B cell (primary cell): ENCODE measurements at regions of chr7 and their contacts with region 1.

Region 1: GRCh38 chr7:98251841-98252639 is at the start of gene TECPR1:
- DNase-seq: peak; percentile 91
- ATAC-seq: peak; percentile 95
- H3K4me3 ChIP-seq: peak within 1 kb of the TSS; percentile 78 to 95 (median 83)
- H3K4me3 Mint-ChIP-seq: peak within 1 kb of the TSS; percentile 98
- H3K27ac ChIP-seq: peak within 1 kb of the TSS; percentile 68 to 71
- H3K27ac Mint-ChIP-seq: peak within 1 kb of the TSS; percentile 90
- H3K4me1 ChIP-seq: peaks cover 22 to 40% of the 10 kb centered on the region in 2 donors
- H3K4me1 Mint-ChIP-seq: peaks cover 34% of the 10 kb centered on the region
- H3K27me3 ChIP-seq: no peaks in the 10 kb centered on the region
- H3K27me3 Mint-ChIP-seq: no peaks in the 10 kb centered on the region
- CTCF ChIP-seq: no peak
- total RNA-seq, gene TECPR1: 52.2 and 66.4 TPM in 2 replicates

Region 2: DNA sequence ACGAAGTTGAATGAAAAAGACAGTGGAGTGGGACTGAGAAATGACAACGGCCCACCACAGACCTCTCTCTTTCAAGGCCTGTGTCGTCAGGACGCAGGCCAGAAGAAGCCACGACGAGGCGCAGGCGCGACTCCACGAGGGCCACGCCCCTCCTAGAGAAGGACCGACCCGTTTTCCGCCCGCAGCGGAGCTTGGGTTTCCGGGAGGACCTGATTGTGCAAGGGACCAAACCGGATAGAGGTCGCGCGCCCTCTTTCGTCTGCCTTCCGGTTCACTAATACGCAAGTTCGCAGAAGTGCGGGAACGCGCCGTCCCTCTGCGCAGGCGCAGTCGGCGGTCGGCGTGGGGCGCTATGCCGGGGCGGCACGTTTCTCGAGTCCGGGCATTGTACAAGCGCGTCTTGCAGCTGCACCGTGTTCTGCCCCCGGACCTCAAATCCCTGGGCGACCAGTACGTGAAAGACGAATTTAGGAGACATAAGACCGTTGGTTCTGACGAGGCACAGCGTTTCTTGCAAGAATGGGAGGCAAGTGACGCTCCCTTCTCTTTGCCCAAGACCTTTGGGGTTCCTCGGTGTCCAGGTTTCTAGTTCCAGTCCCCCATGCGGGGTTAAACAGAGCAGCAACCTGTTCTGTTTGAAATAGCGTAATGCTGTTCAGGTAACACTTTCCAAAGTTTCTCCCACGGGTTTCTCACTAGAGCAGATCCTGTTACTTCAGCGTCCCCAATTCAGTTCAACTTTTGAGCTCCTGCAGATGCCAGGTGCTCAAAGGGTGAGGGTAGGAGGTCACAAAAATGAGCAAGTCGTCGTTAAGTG is 1134.5 kb before region 1 on chr7 and contains the start of gene SDHAF3:
- CTCF ChIA-PET with region 1: no interaction called
- POLR2A ChIA-PET with region 1: no interaction called
- intact Hi-C with region 1: loop called (anchors 10 kb)
- DNase-seq: peak; percentile 98
- ATAC-seq: peak; percentile 85
- H3K4me3 ChIP-seq: peak within 1 kb of the TSS; percentile 71 to 99 (median 88)
- H3K4me3 Mint-ChIP-seq: peak within 1 kb of the TSS; percentile 92
- H3K27ac ChIP-seq: peak within 1 kb of the TSS; percentile 85 to 90
- H3K27ac Mint-ChIP-seq: peak within 1 kb of the TSS; percentile 96
- H3K4me1 ChIP-seq: peaks cover 24 to 25% of the 10 kb centered on the region in 2 donors
- H3K4me1 Mint-ChIP-seq: peaks cover 51% of the 10 kb centered on the region
- H3K27me3 ChIP-seq: no peaks in the 10 kb centered on the region
- H3K27me3 Mint-ChIP-seq: no peaks in the 10 kb centered on the region
- CTCF ChIP-seq: peak; percentile 23
- total RNA-seq, gene SDHAF3: 18.5 and 20.2 TPM in 2 replicates

Region 3: GRCh38 chr7:98106647-98107445 is 145.2 kb before region 1 on chr7 and contains the start of gene LMTK2:
- CTCF ChIA-PET with region 1: interaction called, 6 read pairs
- POLR2A ChIA-PET with region 1: interaction called, 6 read pairs
- intact Hi-C with region 1: loop called (anchors 1 kb)
- DNase-seq: peak; percentile 97
- ATAC-seq: peak; percentile 100
- H3K4me3 ChIP-seq: peak within 1 kb of the TSS; percentile 74 to 91 (median 84)
- H3K4me3 Mint-ChIP-seq: peak within 1 kb of the TSS; percentile 98
- H3K27ac ChIP-seq: peak within 1 kb of the TSS; percentile 47 to 77
- H3K27ac Mint-ChIP-seq: peak within 1 kb of the TSS; percentile 92
- H3K4me1 ChIP-seq: peaks cover 10 to 14% of the 10 kb centered on the region in 2 donors
- H3K4me1 Mint-ChIP-seq: peaks cover 24% of the 10 kb centered on the region
- H3K27me3 ChIP-seq: peaks cover 0 to 24% (median 14%) of the 10 kb centered on the region in 4 experiments
- H3K27me3 Mint-ChIP-seq: peaks cover 10% of the 10 kb centered on the region
- CTCF ChIP-seq: peak; percentile 91
- total RNA-seq, gene LMTK2: 13.1 and 16.7 TPM in 2 replicates

Region 4: DNA sequence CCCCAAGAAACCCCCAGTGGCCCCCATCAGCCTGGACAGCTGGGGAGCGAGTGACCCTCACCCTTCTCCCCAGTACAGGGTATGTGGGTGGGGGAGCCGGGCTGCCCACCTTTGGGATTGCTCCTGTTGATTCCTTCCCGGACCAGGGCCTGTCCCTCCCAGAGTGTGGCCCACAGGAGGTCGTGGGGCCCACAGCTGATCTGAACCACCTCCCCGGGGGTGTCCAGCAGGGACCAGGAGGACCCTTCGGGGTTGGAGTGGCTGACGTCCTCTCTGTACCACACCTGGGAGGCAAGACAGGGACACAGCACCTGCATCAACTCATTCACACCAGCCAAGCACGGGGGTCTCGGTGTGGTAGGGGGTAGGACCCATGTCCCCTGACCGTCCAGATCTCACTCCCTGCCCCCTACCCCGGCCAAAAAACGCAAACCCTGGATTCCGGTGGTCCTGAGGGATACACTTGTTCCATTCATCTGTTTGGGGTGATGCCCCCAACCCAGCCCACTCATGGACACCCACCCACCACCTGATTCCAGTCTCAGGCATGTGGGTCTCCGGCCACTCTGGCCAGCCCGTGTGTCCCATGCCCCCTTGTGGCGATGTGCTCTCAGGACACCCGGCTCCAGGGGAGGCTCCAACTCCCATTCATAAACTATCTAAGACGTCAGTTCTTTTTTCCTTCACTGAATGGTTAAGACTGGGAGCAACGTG is 10.9 kb before region 1 on chr7:
- CTCF ChIA-PET with region 1: interaction called, 4 read pairs
- POLR2A ChIA-PET with region 1: no interaction called
- intact Hi-C with region 1: loop called (anchors 1 kb)
- DNase-seq: peak; percentile 46
- ATAC-seq: peak; percentile 57
- H3K4me3 ChIP-seq: no peak overlapping the region
- H3K4me3 Mint-ChIP-seq: no peak overlapping the region
- H3K27ac ChIP-seq: no peak overlapping the region
- H3K27ac Mint-ChIP-seq: no peak overlapping the region
- H3K4me1 ChIP-seq: no peaks in the 10 kb centered on the region
- H3K4me1 Mint-ChIP-seq: no peaks in the 10 kb centered on the region
- H3K27me3 ChIP-seq: no peaks in the 10 kb centered on the region
- H3K27me3 Mint-ChIP-seq: no peaks in the 10 kb centered on the region
- CTCF ChIP-seq: peak; percentile 67

Region 5: DNA sequence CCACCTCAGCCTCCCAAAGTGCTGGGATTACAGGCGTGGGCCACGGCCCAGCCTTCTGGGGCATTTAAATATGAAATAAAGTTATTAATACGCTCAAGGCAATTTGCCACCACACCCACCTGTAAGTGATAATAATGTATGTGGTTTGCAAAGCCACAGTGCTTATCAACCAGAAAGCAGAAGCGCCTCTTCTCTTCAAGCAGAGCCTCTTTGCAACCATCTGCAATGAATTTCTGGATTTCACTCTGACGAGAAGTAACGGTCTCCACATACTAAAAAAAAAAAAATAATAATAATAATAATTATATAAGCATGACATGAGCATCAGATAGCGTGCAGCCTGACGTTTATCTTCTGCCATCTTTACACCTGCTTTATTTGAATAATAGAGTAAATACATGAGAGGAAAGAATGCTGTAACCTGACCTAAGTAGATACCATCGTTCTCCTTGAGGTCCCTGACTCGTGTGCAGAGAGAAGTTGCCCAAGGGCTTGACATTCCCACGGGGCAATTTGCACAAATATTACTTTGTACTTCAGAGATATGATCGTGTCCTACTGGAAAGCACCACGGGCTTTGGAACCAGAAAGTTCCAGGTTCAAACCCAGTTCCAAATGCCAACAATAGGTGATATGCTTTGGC is 63.4 kb after region 1 on chr7:
- CTCF ChIA-PET with region 1: no interaction called
- POLR2A ChIA-PET with region 1: no interaction called
- intact Hi-C with region 1: loop called (anchors 5 kb)
- DNase-seq: peak; percentile 79
- ATAC-seq: peak; percentile 57
- H3K4me3 ChIP-seq: peak overlapping the region in 1 of 5 experiments; percentile 23
- H3K4me3 Mint-ChIP-seq: peak overlapping the region; percentile 56
- H3K27ac ChIP-seq: peak overlapping the region; percentile 72 to 87
- H3K27ac Mint-ChIP-seq: no peak overlapping the region
- H3K4me1 ChIP-seq: peaks cover 26 to 41% of the 10 kb centered on the region in 2 donors
- H3K4me1 Mint-ChIP-seq: peaks cover 41% of the 10 kb centered on the region
- H3K27me3 ChIP-seq: peaks cover 0 to 28% (median 16%) of the 10 kb centered on the region in 4 experiments
- H3K27me3 Mint-ChIP-seq: peaks cover 24% of the 10 kb centered on the region
- CTCF ChIP-seq: no peak

Region 6: GRCh38 chr7:98878365-98879165 is 626.5 kb after region 1 on chr7 and contains the start of gene TRRAP:
- CTCF ChIA-PET with region 1: no interaction called
- POLR2A ChIA-PET with region 1: no interaction called
- intact Hi-C with region 1: loop called (anchors 5 kb)
- DNase-seq: peak; percentile 91
- ATAC-seq: peak; percentile 75
- H3K4me3 ChIP-seq: peak within 1 kb of the TSS; percentile 12 to 100 (median 98)
- H3K4me3 Mint-ChIP-seq: peak within 1 kb of the TSS; percentile 92
- H3K27ac ChIP-seq: peak within 1 kb of the TSS; percentile 75 to 89
- H3K27ac Mint-ChIP-seq: peak within 1 kb of the TSS; percentile 90
- H3K4me1 ChIP-seq: peaks cover 11 to 16% of the 10 kb centered on the region in 2 donors
- H3K4me1 Mint-ChIP-seq: peaks cover 11% of the 10 kb centered on the region
- H3K27me3 ChIP-seq: peaks cover 0 to 6% (median 0%) of the 10 kb centered on the region in 4 experiments
- H3K27me3 Mint-ChIP-seq: no peaks in the 10 kb centered on the region
- CTCF ChIP-seq: peak; percentile 94
- total RNA-seq, gene TRRAP: 102 and 107 TPM in 2 replicates